GM13977 (cell line): ENCODE measurements at regions of chr17 and their contacts with region 1.

Region 1: DNA sequence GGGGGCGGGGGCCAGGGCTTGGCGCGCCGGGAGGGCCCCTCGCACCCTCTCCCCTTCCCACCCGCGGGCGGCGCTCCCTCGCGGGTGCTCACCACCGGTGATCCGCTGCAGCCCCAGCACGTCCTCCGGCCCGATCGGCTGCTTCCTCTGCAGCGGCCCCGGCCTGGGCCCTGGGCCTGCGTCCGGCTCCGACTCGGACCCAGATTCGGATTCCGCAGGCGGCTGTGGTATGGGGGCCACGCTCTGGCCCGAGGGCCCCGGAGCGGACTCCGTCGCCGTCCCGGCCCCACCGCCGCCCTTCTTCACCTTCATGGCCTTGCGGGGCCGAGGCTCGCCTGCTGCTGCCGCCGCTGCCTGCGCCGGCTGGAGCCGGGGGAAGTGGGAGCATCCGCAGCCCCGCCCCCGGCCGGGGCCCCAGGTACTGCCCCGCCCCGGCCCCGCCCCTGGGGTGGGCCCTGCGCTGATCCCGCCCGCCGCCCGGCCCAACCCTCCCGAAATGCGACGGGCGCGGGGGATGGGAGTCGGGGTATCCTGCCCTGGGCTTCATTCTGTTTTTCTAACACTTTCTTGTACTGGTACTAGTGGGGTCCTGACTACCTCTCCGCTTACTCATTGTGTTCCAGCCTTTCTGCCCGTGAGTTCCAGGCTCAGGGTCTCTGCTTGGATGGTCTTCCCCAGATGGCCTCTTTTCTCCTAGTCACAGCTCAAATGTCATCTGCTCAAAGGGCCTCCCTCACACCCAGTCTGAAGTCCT is at the start of gene UNC119:
- DNase-seq: peak; percentile 94
- CTCF ChIP-seq: peak; percentile 10

Region 2: DNA sequence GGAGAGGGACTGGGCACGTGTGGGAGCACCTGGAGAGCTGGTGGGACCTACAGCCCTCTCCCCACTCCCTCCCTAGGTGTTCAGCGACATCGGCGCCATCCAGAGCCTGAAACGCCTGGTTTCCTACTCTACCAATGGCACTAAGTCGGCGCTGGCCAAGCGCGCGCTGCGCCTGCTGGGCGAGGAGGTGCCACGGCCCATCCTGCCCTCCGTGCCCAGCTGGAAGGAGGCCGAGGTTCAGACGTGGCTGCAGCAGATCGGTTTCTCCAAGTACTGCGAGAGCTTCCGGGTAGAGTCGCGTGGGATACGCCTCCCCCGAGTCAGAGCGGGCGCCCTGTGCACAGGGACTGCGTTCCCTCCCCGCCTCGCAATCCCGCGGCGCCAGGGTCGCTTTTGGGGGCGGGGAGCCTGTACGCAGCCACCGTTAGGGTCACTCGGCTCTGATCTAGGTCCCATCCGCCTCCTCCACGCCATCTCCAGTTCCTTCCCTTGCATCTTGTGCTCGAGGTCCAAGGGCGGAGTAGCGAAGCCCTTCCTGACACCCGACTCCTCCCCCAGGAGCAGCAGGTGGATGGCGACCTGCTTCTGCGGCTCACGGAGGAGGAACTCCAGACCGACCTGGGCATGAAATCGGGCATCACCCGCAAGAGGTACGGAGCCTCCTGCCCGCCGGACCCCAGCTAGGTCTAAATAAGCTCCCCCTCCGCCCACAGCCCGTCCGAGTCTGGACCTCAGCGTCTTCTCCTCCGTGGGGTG is 168.0 kb before region 1 on chr17:
- in situ Hi-C with region 1: loop called (anchors 25 kb)
- DNase-seq: peak; percentile 79
- CTCF ChIP-seq: no peak

Region 3: DNA sequence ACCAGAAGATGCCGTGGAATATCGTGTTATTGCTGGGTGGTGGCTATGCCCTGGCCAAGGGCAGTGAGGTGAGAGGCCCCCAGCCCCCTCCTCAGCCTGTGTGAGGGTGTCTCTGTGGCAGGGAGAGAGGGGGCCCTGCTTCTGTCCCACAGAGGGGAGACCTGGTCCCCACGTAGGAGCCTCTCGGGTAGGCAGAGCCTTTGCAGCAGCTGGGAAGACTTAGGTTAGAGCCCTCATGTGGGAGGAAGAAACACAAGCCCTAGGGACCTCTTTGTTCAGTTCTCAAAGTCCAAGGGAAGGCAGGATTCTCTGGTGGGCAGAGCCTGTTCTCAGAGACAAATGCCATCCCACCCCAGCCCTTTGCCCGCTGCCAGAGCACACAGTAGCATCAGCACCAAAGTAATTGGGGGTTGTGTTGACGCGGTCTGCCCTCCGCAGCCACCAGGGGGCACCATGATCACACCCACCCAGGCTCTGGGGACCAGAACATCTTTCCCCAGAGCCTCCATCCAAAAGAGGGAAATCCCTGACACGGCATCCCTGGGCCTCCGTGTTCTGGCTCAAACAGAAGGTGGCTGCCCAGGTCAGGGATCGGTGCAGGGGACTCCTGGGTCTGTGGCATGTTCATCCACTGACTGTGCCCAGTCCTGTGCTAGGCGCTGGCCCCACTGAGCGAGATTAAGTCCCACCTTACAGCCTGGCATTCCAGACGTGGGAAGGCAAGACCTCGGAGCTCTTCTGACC is 57.8 kb before region 1 on chr17:
- in situ Hi-C with region 1: loop called (anchors 5 kb)
- DNase-seq: peak; percentile 90
- CTCF ChIP-seq: peak; percentile 94

Region 4: GRCh38 chr17:28599311-28600184 is 47.1 kb after region 1 on chr17:
- in situ Hi-C with region 1: loop called (anchors 10 kb)
- DNase-seq: peak; percentile 82
- CTCF ChIP-seq: no peak

Region 5: GRCh38 chr17:28710861-28711722 is 158.7 kb after region 1 on chr17:
- in situ Hi-C with region 1: no loop called
- DNase-seq: peak; percentile 98
- CTCF ChIP-seq: no peak